Activated CD4-positive, alpha-beta T cell treated with anti-CD3 and anti-CD28 coated beads, Interleukin-2, amount 10 ng/mL, durations not matched to agents 24 days and 14 days (primary cell): ENCODE measurements at regions of chr17 and their contacts with region 1.

Region 1: GRCh38 chr17:2847381-2848333 is 51.4 kb downstream of the RAP1GAP2 start:
- DNase-seq: no peak
- H3K4me3 Mint-ChIP-seq: no peak overlapping the region
- H3K27ac Mint-ChIP-seq: no peak overlapping the region
- H3K4me1 Mint-ChIP-seq: peaks cover 13% of the 10 kb centered on the region
- H3K27me3 Mint-ChIP-seq: peaks cover 21% of the 10 kb centered on the region

Region 2: DNA sequence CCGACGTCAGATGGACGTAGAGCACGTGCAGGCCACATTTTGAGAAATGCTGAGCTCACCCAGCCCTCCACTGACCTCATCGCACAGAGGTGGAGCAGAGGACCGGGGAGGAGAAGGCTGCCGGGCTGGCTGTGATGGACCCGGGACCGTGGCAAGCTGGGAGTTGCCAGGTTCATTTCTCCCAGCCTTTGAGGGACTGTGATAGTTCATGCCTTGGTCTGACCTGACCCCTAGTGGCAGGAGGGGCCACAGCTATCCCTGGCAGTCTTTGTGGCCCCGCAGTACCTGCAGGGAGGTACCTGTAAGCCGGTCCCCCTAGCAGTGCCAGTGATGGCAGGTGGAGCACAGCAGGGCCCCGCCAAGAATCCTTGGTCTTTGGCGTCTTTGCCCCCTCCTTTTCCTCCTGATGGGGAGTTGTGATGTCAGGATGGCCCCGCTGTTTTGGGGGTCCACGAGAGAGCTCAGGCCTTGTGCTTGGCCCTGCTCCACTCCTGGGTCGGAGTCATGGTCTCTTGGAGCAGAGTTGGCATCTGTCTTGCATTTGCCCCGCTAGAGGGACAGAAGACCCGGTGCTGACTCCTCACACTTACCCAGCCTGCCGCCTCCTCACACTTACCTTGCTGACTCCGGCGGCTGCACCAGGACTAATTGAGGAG is 165.4 kb after region 1 on chr17:
- intact Hi-C with region 1: loop called (anchors 1 kb)
- DNase-seq: peak; percentile 83
- H3K4me3 Mint-ChIP-seq: no peak overlapping the region
- H3K27ac Mint-ChIP-seq: no peak overlapping the region
- H3K4me1 Mint-ChIP-seq: no peaks in the 10 kb centered on the region
- H3K27me3 Mint-ChIP-seq: no peaks in the 10 kb centered on the region